Colonic mucosa (tissue), 4 donors: ENCODE measurements at regions of chr3 and their contacts with region 1.

Region 1: DNA sequence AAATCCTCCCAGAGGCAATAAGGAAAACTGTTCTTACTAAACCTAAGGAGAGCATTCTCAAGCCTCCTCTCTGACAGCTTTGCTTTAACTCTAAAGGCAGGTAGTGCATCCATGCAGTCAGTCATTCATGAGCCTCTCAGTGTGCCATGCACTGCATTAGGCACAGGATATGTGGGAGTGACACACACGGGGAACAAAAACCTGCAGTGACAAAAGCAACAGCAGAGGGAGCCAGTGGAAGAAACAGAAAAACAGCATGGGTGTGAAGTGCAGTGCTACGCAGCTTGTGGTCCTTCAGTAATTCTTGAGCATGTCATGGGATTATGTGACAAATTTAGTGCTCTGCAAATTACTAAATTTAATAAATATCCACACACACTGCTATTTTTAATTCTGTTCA is 230.7 kb downstream of the BBX start:
- DNase-seq: peak; percentile 33
- H3K4me3 ChIP-seq: no peak overlapping the region
- H3K27ac ChIP-seq: no peak overlapping the region
- H3K4me1 ChIP-seq: no peaks in the 10 kb centered on the region
- H3K27me3 ChIP-seq: no peaks in the 10 kb centered on the region
- CTCF ChIP-seq: peak; percentile 43

Region 2: GRCh38 chr3:107045791-107046190 is 707.7 kb before region 1 on chr3:
- intact Hi-C with region 1: no loop called
- DNase-seq: no peak
- H3K4me3 ChIP-seq: no peak overlapping the region
- H3K27ac ChIP-seq: no peak overlapping the region
- H3K4me1 ChIP-seq: no peaks in the 10 kb centered on the region
- H3K27me3 ChIP-seq: no peaks in the 10 kb centered on the region
- CTCF ChIP-seq: no peak

Region 3: GRCh38 chr3:107329088-107329487 is 424.4 kb before region 1 on chr3:
- intact Hi-C with region 1: no loop called
- DNase-seq: no peak
- H3K4me3 ChIP-seq: no peak overlapping the region
- H3K27ac ChIP-seq: no peak overlapping the region
- H3K4me1 ChIP-seq: no peaks in the 10 kb centered on the region
- H3K27me3 ChIP-seq: no peaks in the 10 kb centered on the region
- CTCF ChIP-seq: no peak

Region 4: DNA sequence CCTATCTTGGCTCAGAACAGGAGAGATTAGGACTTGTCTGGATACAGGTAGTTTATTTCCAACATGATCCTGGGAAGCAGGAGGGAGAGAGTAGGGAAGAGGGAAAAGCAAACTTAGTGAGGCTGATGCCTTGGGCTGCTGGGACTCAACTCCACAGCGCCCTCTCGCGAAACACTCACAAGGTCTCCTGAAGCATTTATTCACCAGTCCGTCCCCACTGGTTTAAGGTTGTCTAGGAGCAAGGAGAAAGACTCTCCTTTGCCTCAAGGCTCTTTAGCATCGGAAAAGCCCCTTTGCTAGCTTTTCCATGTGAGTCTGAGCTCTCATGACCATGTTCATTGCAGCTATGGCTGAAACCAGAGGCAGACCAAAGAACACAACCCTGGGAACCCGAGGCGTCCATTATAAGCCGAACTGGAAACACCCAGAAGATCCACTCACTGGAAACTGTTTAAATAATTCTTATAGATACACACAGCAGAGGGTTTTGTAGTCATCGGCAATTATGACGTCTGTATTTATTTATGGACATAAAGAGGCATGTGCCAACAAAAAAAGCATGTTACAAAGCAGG is 92.9 kb after region 1 on chr3:
- intact Hi-C with region 1: loop called (anchors 10 kb)
- DNase-seq: peak; percentile 64
- H3K4me3 ChIP-seq: no peak overlapping the region
- H3K27ac ChIP-seq: no peak overlapping the region
- H3K4me1 ChIP-seq: no peaks in the 10 kb centered on the region
- H3K27me3 ChIP-seq: no peaks in the 10 kb centered on the region
- CTCF ChIP-seq: peak; percentile 46